PC-9 (cell line): ENCODE measurements at regions of chr7 and their contacts with region 1.

Region 1: DNA sequence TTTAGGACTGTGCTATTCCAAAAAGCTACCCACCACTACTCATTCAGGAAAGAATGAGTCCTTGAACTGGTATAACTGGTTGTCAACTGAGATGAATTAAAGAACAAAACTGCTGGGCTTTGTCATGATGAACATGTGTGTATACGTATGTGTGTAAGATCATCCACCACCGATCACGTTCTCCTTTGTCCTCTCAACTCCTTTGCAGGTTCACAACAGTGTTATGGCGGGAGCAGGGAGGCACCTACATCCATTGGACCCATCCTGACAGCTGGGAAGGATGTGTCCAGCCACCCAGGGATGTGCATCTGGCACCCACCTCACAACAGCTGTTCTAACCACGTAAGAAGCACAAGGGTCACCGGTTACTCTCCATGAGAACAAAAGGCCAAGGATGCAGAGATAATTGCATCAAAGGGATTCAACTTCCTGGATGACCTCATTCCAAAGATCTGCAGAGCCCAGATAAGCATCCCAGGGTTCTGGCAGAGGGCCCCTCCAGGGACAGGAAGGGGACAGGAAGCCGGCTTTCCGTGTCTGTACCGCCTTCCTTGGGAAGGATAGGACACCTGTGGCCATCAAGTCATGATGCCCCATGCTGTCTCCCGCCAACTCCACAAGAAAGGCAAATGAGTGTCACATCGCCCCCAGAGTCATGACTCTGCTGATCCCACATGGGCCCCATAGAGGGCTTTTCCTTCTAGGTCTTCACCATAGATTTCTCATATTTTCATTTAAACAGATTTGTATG is 66.1 kb downstream of the STEAP1B start:
- DNase-seq: peak; percentile 53 to 92
- H3K4me3 ChIP-seq: peak overlapping the region; percentile 10; the same call in 1 of the 2 replicates
- H3K27ac ChIP-seq: peak overlapping the region; percentile 91
- H3K4me1 ChIP-seq: peaks cover 59% of the 10 kb centered on the region
- H3K27me3 ChIP-seq: no peaks in the 10 kb centered on the region
- CTCF ChIP-seq: no peak

Region 2: GRCh38 chr7:22350466-22351328 is 83.2 kb before region 1 on chr7:
- CTCF ChIA-PET with region 1: no interaction called
- POLR2A ChIA-PET with region 1: interaction called, 7 read pairs
- intact Hi-C with region 1: loop called (anchors 5 kb)
- DNase-seq: peak; percentile 30 to 89
- H3K4me3 ChIP-seq: no peak overlapping the region
- H3K27ac ChIP-seq: peak overlapping the region; percentile 40
- H3K4me1 ChIP-seq: peaks cover 65% of the 10 kb centered on the region
- H3K27me3 ChIP-seq: no peaks in the 10 kb centered on the region
- CTCF ChIP-seq: no peak

Region 3: DNA sequence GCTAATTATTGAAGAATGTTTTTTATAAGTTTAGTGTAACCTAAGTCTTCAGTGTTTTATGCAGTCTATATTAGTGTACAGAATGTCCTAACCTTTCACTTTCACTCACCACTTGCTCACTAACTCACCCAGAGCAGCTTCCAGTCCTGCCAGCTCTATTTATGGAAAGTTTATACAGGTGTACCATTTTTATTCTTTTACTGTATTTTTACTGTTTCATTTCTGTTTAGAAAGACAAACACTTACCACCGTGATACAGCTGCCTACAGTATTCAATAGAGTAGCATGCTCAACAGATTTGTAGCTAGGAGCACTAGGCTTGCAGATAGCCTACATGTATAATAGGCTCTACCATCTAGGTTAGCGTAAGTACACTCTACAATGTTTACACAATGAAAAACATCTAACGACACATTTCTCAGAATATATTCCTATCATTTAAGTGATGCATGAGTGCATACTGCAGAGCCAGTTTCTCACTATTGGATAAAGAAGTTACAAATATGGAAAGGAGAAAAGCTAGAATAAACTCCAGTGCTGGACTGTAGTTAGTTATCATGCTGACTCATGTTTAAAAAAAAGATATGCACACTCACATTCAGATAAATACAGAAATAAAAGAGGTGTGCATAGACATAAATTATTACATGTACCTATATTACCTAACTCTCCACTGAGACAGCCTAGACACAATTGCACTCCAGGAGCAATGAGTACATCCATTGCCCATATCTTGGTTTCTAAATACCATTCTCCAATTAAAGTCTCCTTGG is 35.7 kb after region 1 on chr7:
- CTCF ChIA-PET with region 1: no interaction called
- POLR2A ChIA-PET with region 1: no interaction called
- intact Hi-C with region 1: no loop called
- DNase-seq: no peak
- H3K4me3 ChIP-seq: no peak overlapping the region
- H3K27ac ChIP-seq: no peak overlapping the region
- H3K4me1 ChIP-seq: no peaks in the 10 kb centered on the region
- H3K27me3 ChIP-seq: no peaks in the 10 kb centered on the region
- CTCF ChIP-seq: no peak